ENCODE measurements at regions of chr19 and their contacts with region 1.

Region 1: GRCh38 chr19:11987405-11988281 is 22.8 kb downstream of the ZNF763 start:
- DNase-seq: peak; percentile 98
- ATAC-seq: peak; percentile 97
- H3K4me3 Mint-ChIP-seq: peak overlapping the region; percentile 98
- H3K27ac Mint-ChIP-seq: peak overlapping the region; percentile 99
- H3K4me1 Mint-ChIP-seq: peaks cover 31% of the 10 kb centered on the region
- H3K27me3 Mint-ChIP-seq: no peaks in the 10 kb centered on the region
- CTCF ChIP-seq: no peak

Region 2: DNA sequence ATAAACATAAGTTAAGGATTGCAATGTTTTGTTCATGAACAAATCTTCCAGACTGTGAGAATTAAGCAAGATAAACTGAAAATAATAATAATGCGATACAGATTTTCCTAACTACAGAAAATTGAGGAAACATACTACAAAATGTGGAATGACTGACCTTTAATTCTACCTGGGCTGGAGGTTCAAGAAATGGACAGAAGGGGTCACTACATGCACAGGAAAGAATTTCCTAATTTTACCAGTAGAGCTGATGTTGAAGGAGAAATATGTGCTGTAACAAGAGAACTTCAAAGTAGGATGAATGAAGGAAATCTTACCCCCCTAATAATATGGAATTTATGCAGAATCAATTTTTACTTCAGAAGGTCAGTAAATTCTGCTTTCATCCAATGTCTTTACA is 328.0 kb before region 1 on chr19:
- CTCF ChIA-PET with region 1: no interaction called
- POLR2A ChIA-PET with region 1: no interaction called
- DNase-seq: no peak
- ATAC-seq: 0 out of 2 replicates have a peak, but pooled peaks have one; percentile 24
- H3K4me3 Mint-ChIP-seq: no peak overlapping the region
- H3K27ac Mint-ChIP-seq: no peak overlapping the region
- H3K4me1 Mint-ChIP-seq: peaks cover 9% of the 10 kb centered on the region
- H3K27me3 Mint-ChIP-seq: no peaks in the 10 kb centered on the region
- CTCF ChIP-seq: 0 out of 2 replicates have a peak, but pooled peaks have one; percentile 26

Region 3: DNA sequence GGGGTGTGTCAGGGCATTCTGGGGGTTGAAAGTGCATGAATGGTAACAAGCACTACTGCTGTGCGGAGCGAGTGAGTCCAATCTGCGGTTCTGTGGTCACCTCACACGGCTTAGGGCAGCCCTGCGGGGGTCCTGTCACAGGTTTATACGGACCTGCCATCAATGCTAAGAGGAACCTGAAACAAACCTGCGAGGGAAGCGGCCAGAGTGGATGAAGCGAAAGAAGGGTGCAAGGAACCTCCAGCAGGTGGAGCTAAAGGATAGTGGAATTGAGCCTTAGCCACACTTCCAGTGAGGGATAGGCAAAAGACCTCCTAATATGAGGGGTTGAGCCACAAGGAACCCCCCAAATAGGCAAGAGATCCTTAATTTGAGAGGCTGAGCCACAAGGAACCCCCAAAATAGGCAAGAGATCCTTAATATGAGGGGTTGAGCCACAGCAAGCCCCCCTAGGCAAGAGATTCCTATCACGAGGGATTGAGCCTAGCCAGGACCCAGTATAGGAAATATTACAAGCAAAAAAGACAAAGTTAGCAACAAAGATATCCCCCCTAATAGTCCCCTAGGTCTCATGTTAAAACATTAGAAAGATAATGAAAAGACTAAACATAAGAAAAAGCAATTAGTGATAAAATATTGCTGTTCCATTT is 106.4 kb before region 1 on chr19:
- CTCF ChIA-PET with region 1: interaction called, 23 read pairs
- POLR2A ChIA-PET with region 1: no interaction called
- DNase-seq: peak; percentile 76
- ATAC-seq: peak; percentile 74
- H3K4me3 Mint-ChIP-seq: peak overlapping the region; percentile 13
- H3K27ac Mint-ChIP-seq: no peak overlapping the region
- H3K4me1 Mint-ChIP-seq: peaks cover 1% of the 10 kb centered on the region; the same call in 1 of the 2 replicates
- H3K27me3 Mint-ChIP-seq: peaks cover 8% of the 10 kb centered on the region
- CTCF ChIP-seq: peak; percentile 51

Region 4: DNA sequence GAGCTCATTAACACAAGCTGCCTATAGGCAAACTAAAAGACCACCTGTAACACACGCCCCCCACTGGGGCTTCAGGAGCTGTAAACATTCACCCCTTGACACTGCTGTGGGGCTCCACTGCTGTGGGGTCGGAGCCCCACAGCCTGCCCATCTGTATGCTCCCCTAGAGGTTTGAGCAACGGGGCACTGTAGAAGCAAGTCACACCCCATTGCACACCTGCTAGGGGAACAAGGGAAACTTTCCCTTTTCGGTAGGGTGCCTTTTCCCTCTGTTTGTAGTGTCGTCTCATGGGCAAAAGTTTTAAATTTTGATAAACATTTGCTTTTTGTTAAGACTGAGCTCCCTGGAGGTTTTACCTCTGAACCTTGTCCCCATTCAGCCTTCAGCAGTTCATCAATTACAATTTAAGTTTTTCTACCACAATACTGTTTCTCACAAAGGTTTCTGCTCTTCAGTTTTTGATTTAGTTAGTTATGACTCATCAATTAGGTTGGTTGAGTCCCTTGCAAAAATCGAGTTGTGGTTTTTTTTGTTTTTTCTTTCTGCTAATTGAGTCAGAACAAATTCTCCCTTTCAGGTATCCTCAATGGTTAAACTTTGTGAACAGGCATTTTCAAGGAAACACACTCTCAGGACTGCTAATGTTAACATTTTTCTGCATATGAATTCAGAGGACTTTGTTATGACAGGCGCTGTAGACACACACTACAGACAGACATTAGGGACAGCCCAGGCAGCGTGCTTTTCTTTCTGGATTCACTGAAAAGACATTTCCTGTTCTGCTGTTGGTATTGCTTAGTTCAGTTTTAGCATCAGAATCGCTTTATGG is 12.7 kb after region 1 on chr19:
- CTCF ChIA-PET with region 1: interaction called, 15 read pairs
- POLR2A ChIA-PET with region 1: interaction called, 4 read pairs
- DNase-seq: no peak
- ATAC-seq: no peak
- H3K4me3 Mint-ChIP-seq: no peak overlapping the region
- H3K27ac Mint-ChIP-seq: no peak overlapping the region
- H3K4me1 Mint-ChIP-seq: peaks cover 14% of the 10 kb centered on the region
- H3K27me3 Mint-ChIP-seq: no peaks in the 10 kb centered on the region
- CTCF ChIP-seq: no peak

Region 5: DNA sequence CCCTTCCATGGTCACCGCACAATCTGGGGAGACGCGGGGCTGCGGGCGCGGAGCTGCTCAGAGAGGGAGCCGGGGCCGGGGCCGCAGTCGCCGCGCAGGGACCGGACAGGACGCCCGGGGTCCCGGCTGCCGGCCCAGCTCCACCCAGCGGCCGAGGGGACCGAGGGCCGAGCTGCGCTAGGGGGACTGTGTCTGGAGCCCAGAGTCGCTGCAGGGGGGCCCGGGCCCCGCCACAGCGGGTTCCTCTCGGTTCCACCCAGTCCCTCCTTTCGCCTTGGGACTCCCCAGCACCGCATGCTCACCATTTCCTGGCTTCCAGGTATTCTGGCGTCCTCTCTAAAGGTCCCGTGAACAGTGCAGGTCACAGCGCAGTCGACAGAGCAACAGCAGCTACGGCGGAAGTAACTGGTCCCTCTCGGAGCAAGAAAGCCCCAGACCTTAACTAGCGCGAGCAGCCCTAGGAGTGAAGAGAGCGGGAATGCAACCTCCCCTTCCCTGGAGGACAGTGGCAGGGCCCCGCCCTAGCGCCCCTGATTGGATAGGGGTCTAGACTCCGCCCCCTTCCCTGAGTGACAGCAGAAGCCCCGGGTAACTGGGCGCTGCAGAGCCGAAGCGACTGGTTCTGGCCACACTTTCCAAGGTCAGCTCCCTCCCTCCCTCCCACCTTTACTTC is 65.0 kb after region 1 on chr19 and contains the start of gene ZNF878:
- CTCF ChIA-PET with region 1: interaction called, 20 read pairs
- POLR2A ChIA-PET with region 1: interaction called, 9 read pairs
- DNase-seq: peak; percentile 99
- ATAC-seq: peak; percentile 98
- H3K4me3 Mint-ChIP-seq: peak within 1 kb of the TSS; percentile 91
- H3K27ac Mint-ChIP-seq: peak within 1 kb of the TSS; percentile 98
- H3K4me1 Mint-ChIP-seq: peaks cover 18% of the 10 kb centered on the region
- H3K27me3 Mint-ChIP-seq: peaks cover 2% of the 10 kb centered on the region; the same call in 1 of the 2 replicates
- CTCF ChIP-seq: no peak
- total RNA-seq, gene ZNF878: 10.1 to 12.5 TPM (median 10.7 TPM) in 3 replicates